Dendritic cell treated with granulocyte-macrophage colony-stimulating factor and Interleukin-4, amounts not matched to agents 40 ng/mL and 50 ng/mL, for 4 days (primary cell): ENCODE measurements at regions of chr11 and their contacts with region 1.

Region 1: DNA sequence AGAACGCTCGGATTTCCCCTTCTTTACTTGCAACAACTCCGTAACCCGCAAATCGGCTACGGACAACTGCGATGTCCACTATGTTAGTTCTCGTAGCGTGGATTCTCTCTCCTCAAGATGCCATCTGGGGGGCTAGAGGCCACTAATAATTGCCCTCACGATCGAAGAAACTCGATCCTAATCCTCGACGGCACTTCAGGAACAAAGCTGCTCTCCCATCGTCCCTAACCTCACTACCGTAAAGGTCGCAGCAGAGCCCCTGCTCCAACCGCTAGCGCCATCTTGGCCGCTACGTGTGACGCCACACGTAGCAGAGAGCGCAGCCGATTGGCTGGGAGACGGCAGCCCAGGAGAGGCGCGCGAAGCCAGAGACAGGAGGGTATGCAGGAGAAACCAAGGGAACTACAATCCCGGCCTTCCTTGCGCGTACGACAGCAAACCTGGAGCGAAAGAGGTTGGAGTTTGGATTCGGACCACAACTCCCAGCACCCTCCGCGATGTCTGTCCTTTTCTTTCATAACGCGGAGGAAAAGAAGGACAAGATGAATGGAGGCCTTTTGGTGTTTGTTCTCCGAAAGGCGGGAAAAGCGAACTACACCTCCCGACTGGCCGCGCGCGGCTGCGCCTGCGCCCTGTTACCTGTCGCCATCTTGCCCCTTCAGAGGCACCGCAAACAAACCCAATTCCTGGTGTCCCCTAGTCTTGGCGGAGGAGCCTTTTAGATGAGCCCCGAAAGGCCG is at the start of gene EMSY:
- H3K4me3 Mint-ChIP-seq: peak within 1 kb of the TSS; percentile 97
- H3K27ac Mint-ChIP-seq: peak within 1 kb of the TSS; percentile 98
- H3K4me1 Mint-ChIP-seq: peaks cover 24% of the 10 kb centered on the region
- H3K27me3 Mint-ChIP-seq: no peaks in the 10 kb centered on the region

Region 2: DNA sequence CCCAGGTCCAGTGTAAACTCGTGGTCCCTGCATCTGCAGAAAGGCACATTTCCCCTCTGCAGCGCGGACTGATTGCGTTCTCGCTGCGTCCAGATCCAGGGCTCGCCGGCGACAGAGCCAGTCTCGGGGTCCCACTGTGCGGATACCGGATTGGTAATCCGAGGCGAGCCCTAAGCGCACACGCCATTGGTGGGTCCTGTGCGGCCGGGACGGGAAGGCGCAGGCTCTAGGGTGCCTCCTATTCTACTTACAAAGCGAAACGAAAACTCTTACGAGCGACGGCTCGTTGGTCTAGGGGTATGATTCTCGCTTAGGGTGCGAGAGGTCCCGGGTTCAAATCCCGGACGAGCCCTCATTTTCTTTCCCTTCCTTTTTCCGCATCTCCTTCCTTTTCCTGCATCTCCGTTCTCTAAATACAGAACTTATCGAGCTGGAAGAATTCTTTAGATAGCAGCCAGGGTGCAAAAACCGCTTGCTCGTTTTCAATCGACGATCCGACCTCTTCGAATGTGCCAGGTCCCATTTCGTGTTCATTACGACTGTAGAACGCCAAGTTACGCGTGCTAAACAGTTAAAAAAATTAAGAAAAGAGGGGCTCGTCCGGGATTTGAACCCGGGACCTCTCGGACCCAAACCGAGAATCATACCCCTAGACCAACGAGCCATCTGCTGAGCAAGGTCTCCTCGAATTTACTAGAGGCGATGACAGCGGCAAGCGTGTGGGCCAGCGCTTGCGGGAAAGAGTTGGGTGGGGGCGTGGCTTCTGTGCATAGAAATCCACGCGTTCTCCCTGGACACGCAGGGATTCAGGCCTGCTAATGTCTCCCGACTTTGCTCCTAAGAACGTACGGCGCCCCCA is 209.1 kb before region 1 on chr11:
- intact Hi-C with region 1: loop called (anchors 10 kb)
- H3K4me3 Mint-ChIP-seq: peak overlapping the region; percentile 86
- H3K27ac Mint-ChIP-seq: peak overlapping the region; percentile 82
- H3K4me1 Mint-ChIP-seq: peaks cover 37% of the 10 kb centered on the region
- H3K27me3 Mint-ChIP-seq: peaks cover 9% of the 10 kb centered on the region

Region 3: GRCh38 chr11:76380967-76381719 is 63.4 kb before region 1 on chr11 and contains the starts of genes GVQW3 and THAP12:
- intact Hi-C with region 1: loop called (anchors 2 kb)
- H3K4me3 Mint-ChIP-seq: peak within 1 kb of the TSS; percentile 87
- H3K27ac Mint-ChIP-seq: peak within 1 kb of the TSS; percentile 84
- H3K4me1 Mint-ChIP-seq: peaks cover 67% of the 10 kb centered on the region
- H3K27me3 Mint-ChIP-seq: no peaks in the 10 kb centered on the region

Region 4: DNA sequence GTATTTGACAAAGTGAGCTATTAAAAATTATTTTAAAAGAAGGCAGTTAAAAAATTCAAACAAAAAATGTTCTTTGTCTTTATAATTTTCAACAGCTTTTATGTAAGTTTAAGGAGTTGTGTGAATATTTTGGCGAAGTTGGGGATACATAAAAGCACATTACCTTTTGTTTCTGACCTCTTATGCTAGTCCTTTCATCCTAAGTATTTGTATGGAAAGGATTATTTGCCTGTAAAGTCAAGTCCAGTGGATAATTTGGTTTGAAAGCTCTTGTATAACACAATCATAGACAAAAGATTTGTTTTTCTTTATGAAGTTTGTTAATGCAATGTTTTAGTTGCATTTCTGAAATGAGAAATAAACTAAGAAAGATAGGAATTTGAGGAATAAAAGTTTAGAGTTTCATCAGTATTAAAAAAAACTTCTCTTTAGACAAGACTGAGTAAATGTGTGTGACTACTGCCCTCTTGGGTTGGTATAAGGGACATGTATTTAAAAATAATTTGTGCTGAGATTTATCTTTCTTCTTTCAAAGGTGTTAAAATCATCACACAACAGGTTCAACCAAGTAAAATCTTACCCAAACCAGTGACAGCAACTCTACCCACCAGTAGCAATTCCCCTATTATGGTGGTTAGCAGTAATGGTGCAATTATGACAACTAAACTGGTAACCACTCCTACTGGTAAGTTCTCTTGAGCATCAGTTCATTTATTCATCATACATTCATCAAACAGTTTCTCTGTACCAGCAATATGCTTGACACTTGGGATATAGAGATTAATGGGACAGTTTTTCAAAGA is 68.5 kb after region 1 on chr11:
- intact Hi-C with region 1: no loop called
- H3K4me3 Mint-ChIP-seq: no peak overlapping the region
- H3K27ac Mint-ChIP-seq: no peak overlapping the region
- H3K4me1 Mint-ChIP-seq: no peaks in the 10 kb centered on the region
- H3K27me3 Mint-ChIP-seq: no peaks in the 10 kb centered on the region